ENCODE measurements at regions of chr9 and their contacts with region 1.

Region 1: DNA sequence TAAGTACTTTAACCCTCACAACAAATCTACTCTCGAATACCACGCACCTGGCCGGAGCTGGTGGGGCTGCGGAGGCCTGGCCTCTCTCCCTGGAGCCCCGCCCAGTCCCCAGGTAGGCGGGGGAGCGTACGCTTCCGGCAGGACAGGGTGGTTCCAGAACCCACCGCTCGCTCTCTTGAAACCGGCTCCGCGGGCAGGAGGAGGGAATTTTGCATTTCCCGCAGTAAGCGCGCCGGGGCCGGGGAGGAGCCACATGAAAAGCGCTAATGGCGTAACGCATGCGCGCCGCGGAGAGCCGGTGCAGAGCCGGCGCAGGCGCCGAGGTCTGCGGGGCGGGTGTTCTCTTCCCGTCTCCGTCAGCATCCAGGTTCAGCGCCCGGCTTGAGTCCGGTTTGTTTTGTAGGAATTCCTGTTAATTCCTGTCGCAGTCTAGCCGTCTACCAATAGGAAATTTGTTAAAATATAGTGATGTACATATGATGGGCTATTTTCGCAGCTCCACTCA is 20.8 kb downstream of the CAVIN4 start:
- DNase-seq: peak; percentile 73 to 90 (median 82)
- H3K4me3 ChIP-seq: peak overlapping the region; percentile 42 to 80 (median 66)
- H3K27ac ChIP-seq: peak overlapping the region in 48 of 59 donors; percentile 1 to 84 (median 54)
- H3K27me3 ChIP-seq: no peaks in the 10 kb centered on the region
- CTCF ChIP-seq: peak in 41 of 56 donors; percentile 17 to 67 (median 41)

Region 2: GRCh38 chr9:99184475-99185347 is 1414.0 kb before region 1 on chr9:
- intact Hi-C with region 1: loop called in 1 of 2 experiments (anchors 5 kb)
- DNase-seq: peak; percentile 85 to 94 (median 89)
- H3K4me3 ChIP-seq: peak overlapping the region; percentile 25 to 69 (median 49)
- H3K27ac ChIP-seq: peak overlapping the region in 10 of 59 donors; percentile 0 to 73 (median 40)
- H3K27me3 ChIP-seq: no peaks in the 10 kb centered on the region
- CTCF ChIP-seq: peak; percentile 75 to 99 (median 95)

Region 3: DNA sequence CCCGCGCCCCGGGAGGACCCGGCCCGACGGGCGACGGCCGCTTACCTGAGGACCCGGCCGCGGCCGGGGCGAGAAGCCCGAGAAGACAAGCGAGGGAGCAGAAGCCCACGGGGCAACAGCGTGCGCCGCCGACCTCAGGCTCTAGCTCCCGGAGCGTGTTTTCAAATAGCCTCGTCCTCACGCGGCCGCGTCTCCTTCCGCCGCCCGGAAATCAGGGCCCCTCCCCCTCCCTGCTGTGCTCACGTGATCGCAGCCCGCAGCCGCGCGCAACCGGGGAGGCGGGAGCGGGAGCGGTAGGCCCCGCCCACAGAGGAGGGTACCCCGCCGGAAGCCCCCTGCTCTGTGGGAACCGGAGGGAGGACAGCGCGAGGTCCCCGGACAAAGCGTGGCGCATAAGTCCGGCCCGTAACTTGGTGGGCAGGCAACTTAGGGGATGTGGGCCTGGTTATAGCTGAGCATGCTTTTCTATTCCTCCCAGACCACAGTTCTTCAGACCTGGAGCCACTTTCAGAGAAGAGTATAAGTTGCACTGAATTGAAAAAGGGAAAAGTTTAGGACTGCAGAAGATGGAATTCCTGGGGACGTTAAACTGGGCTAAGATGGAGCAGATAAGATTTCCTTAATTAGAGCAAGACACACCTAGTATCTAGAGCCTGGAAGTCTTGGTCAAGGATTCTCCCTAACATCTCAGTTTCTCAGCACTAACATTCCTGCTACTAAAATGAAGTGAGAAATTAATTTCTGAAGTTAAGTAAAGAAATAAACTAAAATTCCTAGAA is 245.8 kb before region 1 on chr9 and contains the start of gene TEX10:
- intact Hi-C with region 1: loop called (anchors 2 to 5 kb)
- DNase-seq: peak; percentile 78 to 93 (median 84)
- H3K4me3 ChIP-seq: peak within 1 kb of the TSS; percentile 62 to 99 (median 91)
- H3K27ac ChIP-seq: peak within 1 kb of the TSS in 58 of 59 donors; percentile 13 to 89 (median 77)
- H3K27me3 ChIP-seq: no peaks in the 10 kb centered on the region
- CTCF ChIP-seq: peak in 26 of 56 donors; percentile 9 to 48 (median 22)
- total RNA-seq, gene TEX10: 8.5 to 18.4 (median 13.1) TPM

Region 4: GRCh38 chr9:100449420-100449819 is 149.3 kb before region 1 on chr9:
- intact Hi-C with region 1: loop called in 1 of 2 experiments (anchors 2 kb)
- DNase-seq: no peak
- H3K4me3 ChIP-seq: no peak overlapping the region
- H3K27ac ChIP-seq: no peak overlapping the region
- H3K27me3 ChIP-seq: no peaks in the 10 kb centered on the region
- CTCF ChIP-seq: no peak

Region 5: DNA sequence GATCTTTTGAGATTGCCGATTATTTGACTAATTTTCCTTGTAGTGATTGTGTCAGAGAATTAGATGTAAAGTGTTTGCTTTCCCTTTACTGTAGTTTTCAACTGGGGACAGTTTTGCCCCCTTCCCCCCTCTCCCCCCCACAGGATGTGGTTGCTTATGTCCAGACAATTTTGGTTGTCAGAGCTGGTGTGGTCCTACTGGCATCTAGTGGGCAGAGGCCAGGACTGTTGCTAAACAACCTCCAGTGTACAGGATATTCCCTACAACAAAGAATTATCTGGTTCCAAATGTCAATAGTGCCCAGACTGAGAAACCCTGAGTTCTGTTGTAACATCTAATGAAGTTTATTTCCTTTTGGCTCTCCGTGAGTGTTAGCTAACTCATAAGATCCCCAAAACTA is 105.7 kb before region 1 on chr9:
- intact Hi-C with region 1: loop called in 1 of 2 experiments (anchors 10 kb)
- DNase-seq: no peak
- H3K4me3 ChIP-seq: peak overlapping the region in 2 of 59 donors; percentile 1
- H3K27ac ChIP-seq: peak overlapping the region in 47 of 59 donors; percentile 3 to 88 (median 48)
- H3K27me3 ChIP-seq: no peaks in the 10 kb centered on the region
- CTCF ChIP-seq: peak in 22 of 56 donors; percentile 10 to 51 (median 24)

Region 6: DNA sequence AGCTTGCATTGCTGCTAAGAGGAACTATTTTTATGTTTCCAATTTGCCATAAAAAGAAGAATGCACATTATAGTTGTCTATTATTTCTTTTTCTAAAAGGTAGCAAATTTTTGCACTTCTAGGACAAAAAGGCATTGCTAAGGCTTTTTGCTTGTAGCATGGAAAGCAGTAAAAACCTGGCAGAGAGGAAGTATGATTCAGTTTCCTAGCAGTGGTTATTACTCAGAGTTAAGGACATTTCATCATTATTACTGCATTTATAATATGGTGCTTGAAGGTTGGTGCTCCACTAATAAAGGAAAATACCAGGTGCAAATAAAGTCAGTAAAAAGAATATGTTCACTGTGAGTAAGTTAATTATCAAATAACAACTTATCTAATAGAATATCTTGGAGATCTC is 250.0 kb after region 1 on chr9:
- intact Hi-C with region 1: no loop called
- DNase-seq: no peak
- H3K4me3 ChIP-seq: no peak overlapping the region
- H3K27ac ChIP-seq: no peak overlapping the region
- H3K27me3 ChIP-seq: peaks cover 0 to 6% (median 0%) of the 10 kb centered on the region in 45 donors
- CTCF ChIP-seq: no peak

Region 7: DNA sequence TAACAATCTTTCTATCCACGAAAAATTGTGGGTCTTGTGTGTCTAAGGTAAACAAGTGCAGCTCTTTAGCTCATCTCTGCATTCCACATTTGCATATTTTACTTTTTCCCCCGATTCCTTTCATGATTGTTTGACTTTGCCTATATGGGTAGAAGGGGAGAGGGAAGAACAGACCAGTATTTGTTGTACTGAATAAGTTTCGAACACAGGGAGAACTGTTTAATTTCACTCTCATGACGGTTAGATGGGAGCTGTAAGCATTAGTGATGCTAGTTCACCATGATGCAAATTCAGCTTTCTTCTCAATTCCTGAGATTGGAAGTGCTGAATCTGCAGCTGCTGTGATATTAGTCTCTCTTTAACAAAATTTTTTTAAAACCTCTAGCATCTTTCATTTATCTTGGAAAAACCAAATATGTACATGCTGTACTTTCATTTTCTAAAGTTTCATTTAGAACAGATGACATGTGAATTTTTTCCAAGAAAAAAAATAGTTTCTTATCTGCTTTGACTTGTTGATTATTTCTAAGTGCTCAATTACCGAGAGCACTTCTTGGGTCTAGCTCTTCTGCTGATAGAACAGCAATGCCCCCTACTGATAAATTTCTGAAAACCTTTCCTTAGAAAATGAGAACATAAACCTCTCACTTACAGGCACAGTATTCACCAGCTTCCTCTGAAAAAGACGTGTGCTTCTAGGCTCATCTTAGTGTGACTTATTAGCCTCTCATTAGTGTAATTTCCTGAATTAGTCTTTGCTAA is 636.6 kb after region 1 on chr9:
- intact Hi-C with region 1: loop called in 1 of 2 experiments (anchors 10 kb)
- DNase-seq: no peak
- H3K4me3 ChIP-seq: peak overlapping the region in 31 of 59 donors; percentile 3 to 47 (median 17)
- H3K27ac ChIP-seq: peak overlapping the region in 58 of 59 donors; percentile 13 to 91 (median 81)
- H3K27me3 ChIP-seq: no peaks in the 10 kb centered on the region
- CTCF ChIP-seq: peak; percentile 59 to 94 (median 81)

Region 8: DNA sequence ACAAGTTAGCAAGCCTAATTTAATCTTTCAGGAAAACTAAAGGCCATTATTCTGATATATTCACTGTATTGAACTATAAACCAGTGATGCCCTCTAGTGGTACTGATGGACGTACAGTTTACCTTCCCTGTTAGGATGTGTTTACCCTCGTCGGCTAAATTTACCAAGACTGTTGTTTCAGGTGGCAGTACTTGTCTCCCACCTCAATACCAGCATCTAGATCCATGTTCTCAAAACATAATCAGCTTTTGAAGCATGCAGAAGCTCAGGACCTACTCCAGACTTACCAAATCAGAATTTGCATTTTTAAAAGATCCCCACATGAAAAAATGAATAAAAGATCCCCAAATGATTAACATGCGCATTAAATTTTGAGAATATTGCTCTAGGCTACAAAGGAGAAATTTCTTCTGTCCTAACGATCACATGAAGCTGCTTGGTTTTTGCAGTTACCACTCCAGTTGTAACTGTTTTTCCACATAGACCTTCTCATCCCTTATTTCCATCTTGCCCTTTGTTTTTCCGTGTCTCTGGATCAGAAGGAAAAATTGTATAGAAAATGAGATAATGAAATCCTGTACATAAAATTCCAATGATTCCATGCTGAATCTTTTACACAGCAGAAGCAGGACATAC is 789.3 kb after region 1 on chr9:
- intact Hi-C with region 1: loop called in 1 of 2 experiments (anchors 2 kb)
- DNase-seq: no peak
- H3K4me3 ChIP-seq: peak overlapping the region in 5 of 59 donors; percentile 4 to 33 (median 10)
- H3K27ac ChIP-seq: peak overlapping the region in 56 of 59 donors; percentile 6 to 88 (median 77)
- H3K27me3 ChIP-seq: no peaks in the 10 kb centered on the region
- CTCF ChIP-seq: peak; percentile 22 to 78 (median 66)

Measured in dorsolateral prefrontal cortex (tissue), 120 donors.